ENCODE measurements at regions of chr15 and their contacts with region 1.

Region 1: GRCh38 chr15:101121511-101122090 is 130.2 kb downstream of the CHSY1 start:
- DNase-seq: peak in 1 of 2 experiments; percentile 78
- H3K4me3 ChIP-seq: no peak overlapping the region
- H3K27ac ChIP-seq: no peak overlapping the region
- H3K4me1 ChIP-seq: peaks cover 0 to 12% (median 8%) of the 10 kb centered on the region in 4 experiments; a peak in 5 of 7 replicates
- H3K27me3 ChIP-seq: no peaks in the 10 kb centered on the region
- CTCF ChIP-seq: peak; percentile 18 to 34 (median 32); a peak in 3 of 4 replicates
- EP300 ChIP-seq: no peak
- POLR2A ChIP-seq: no peak
- RAD21 ChIP-seq: peak; percentile 38 to 49

Region 2: GRCh38 chr15:101105059-101105891 is 16.3 kb before region 1 on chr15:
- CTCF ChIA-PET with region 1: interaction called, 10 read pairs
- POLR2A ChIA-PET with region 1: no interaction called
- DNase-seq: no peak
- H3K4me3 ChIP-seq: no peak overlapping the region
- H3K27ac ChIP-seq: no peak overlapping the region
- H3K4me1 ChIP-seq: peaks cover 0 to 3% (median 0%) of the 10 kb centered on the region in 4 experiments; a peak in 1 of 7 replicates
- H3K27me3 ChIP-seq: no peaks in the 10 kb centered on the region
- CTCF ChIP-seq: no peak
- EP300 ChIP-seq: no peak
- POLR2A ChIP-seq: no peak
- RAD21 ChIP-seq: no peak

Region 3: DNA sequence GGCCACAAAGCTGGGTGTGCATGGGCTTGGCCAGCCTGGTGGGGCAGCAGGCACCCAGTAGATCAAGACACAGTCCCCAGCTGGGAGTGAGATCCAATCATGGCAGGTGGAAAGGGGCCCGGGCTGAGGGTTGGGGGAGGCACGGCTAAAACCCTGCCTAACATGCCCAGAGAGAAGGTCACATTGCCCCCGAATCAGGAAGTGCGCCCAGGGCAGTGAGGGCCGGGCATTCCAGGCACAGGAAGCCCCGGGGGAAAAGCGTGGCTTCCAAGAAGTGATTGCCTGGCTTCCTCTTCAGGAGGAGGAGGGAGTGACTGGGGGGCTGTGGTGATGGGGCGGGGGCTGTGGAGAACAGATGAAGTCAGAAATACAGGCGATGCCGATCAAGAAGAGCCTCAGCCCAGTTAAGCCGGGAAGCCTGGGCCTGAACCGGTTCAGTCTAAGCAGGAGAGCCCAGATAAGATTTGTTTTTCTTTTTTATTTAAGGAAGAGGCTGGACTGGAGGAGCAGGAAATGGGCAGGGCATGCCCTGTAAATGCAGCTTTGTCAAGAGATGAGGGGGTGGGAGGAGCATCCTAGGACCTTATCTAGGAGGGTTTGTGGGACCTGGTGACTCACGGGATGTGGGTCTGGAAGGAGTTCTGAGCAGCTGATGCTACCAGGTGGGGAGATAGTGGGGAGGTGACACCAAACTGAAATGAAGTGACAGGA is 46.3 kb after region 1 on chr15:
- CTCF ChIA-PET with region 1: interaction called, 14 read pairs
- POLR2A ChIA-PET with region 1: no interaction called
- DNase-seq: no peak
- H3K4me3 ChIP-seq: no peak overlapping the region
- H3K27ac ChIP-seq: no peak overlapping the region
- H3K4me1 ChIP-seq: peaks cover 0 to 8% (median 0%) of the 10 kb centered on the region in 4 experiments; a peak in 3 of 7 replicates
- H3K27me3 ChIP-seq: no peaks in the 10 kb centered on the region
- CTCF ChIP-seq: no peak
- EP300 ChIP-seq: no peak
- POLR2A ChIP-seq: no peak
- RAD21 ChIP-seq: no peak

Measured in H1 (cell line).